ENCODE measurements at regions of chr19 and their contacts with region 1.

Region 1: GRCh38 chr19:45902651-45903625 is 525 bp upstream of the MYPOP start:
- DNase-seq: peak; percentile 100
- H3K4me3 Mint-ChIP-seq: peak overlapping the region; percentile 85
- H3K27ac Mint-ChIP-seq: peak overlapping the region; percentile 91
- H3K4me1 Mint-ChIP-seq: peaks cover 22% of the 10 kb centered on the region
- H3K27me3 Mint-ChIP-seq: peaks cover 2% of the 10 kb centered on the region

Region 2: GRCh38 chr19:45770192-45771101 is 132.5 kb before region 1 on chr19:
- intact Hi-C with region 1: loop called (anchors 1 kb)
- DNase-seq: peak; percentile 97
- H3K4me3 Mint-ChIP-seq: peak overlapping the region; percentile 93
- H3K27ac Mint-ChIP-seq: peak overlapping the region; percentile 56
- H3K4me1 Mint-ChIP-seq: peaks cover 12% of the 10 kb centered on the region
- H3K27me3 Mint-ChIP-seq: peaks cover 20% of the 10 kb centered on the region

Region 3: DNA sequence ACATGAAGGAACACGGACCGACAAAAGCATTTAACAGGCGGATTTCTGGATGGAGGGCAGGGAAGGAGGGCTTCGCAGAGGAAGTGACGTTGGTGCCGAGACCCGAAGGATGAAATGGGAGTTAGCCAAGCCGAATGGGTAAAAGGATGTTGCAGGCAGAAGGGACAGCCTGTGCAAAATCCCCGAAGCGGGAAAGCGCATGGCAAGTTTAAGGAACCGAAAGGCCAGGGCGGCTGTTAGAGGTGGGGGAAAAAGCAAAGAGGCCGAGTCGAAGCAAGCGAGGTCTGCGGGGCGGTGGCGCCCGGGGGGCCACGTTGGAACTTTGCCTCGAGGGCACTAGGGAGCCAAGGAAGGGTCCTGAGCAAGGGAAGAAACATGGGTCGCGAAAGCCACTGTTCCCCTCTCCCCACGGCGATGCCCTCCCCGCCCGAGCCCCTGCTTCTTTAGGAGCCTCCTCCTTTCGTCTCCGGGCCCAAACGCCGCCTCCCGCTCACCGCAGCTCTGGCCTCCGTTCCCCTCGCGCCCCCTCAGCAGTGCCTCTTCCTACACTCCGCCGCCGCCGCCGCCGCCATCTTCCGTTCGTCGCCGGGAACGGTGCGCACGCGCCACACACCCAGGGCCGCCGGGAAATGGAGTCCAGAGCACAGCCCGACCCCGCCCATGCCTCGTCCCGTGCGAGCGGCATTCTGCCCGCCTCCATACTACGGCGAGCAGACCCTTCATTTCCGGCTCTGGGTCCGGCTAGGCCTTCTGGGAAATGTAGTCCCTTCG is 40.2 kb before region 1 on chr19 and contains the start of gene SYMPK:
- intact Hi-C with region 1: loop called (anchors 1 kb)
- DNase-seq: peak; percentile 100
- H3K4me3 Mint-ChIP-seq: peak within 1 kb of the TSS; percentile 90
- H3K27ac Mint-ChIP-seq: peak within 1 kb of the TSS; percentile 97
- H3K4me1 Mint-ChIP-seq: peaks cover 24% of the 10 kb centered on the region
- H3K27me3 Mint-ChIP-seq: peaks cover 36% of the 10 kb centered on the region
- total RNA-seq, gene SYMPK: 124 and 131 TPM in 2 replicates

Region 4: DNA sequence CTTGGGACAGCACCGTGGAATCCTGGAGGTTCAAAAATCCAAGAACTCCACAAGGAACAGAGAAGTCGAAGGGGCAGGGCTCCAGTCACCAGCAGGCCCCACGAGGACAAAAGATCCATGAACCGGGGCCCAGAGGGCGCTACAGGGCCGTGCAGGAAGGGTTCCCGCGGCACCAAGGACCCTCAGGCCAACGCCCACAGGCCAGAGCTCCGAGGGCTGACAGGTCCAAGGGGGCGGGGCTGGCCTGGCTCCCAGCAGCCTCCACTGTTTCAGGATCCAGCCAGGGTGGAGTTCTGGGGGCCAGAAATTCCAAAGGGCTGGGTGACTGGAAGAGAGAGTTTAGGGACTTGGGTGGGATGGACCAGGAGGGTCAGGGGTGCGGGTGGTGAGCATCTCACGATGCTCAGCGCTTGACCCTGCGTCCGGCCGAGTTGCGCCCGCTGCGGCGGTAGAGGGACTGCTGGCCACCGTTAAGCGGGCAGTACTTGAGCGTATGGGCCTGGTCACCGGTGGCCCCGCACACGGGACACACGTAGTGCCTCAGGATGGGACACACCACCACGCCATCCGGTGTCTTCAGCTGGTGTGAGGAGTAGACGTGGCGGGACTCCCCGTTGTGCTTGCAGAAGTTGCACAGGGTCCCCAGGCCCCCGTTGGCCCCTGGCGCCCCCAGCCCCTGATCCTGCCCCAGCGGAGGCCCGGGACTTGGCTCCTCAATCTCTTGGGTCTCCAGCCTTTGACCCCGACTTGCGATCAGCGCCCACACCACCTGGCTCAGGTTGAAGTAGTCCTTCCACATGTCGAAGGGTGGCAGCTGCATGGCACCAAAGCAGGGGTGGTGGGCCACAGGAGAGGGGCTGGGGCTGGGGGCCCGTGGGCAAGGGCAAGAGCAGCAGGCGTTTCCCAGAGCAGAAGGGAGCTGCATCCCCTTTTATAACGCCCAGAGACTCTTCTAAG is 11.2 kb after region 1 on chr19 and contains the start of gene NANOS2:
- intact Hi-C with region 1: no loop called
- DNase-seq: peak; percentile 69
- H3K4me3 Mint-ChIP-seq: no peak within 1 kb of the TSS
- H3K27ac Mint-ChIP-seq: no peak within 1 kb of the TSS
- H3K4me1 Mint-ChIP-seq: peaks cover 17% of the 10 kb centered on the region
- H3K27me3 Mint-ChIP-seq: peaks cover 13% of the 10 kb centered on the region
- total RNA-seq, gene NANOS2: not detected in 2 replicates

Region 5: GRCh38 chr19:45994989-45995714 is 92.2 kb after region 1 on chr19 and contains the start of gene CCDC61:
- intact Hi-C with region 1: loop called (anchors 1 kb)
- DNase-seq: peak; percentile 99
- H3K4me3 Mint-ChIP-seq: no peak within 1 kb of the TSS
- H3K27ac Mint-ChIP-seq: no peak within 1 kb of the TSS
- H3K4me1 Mint-ChIP-seq: peaks cover 20% of the 10 kb centered on the region
- H3K27me3 Mint-ChIP-seq: peaks cover 6% of the 10 kb centered on the region
- total RNA-seq, gene CCDC61: 23.1 and 30.1 TPM in 2 replicates

Region 6: GRCh38 chr19:46600384-46601317 is 697.7 kb after region 1 on chr19:
- intact Hi-C with region 1: loop called (anchors 2 kb)
- DNase-seq: peak; percentile 99
- H3K4me3 Mint-ChIP-seq: peak overlapping the region; percentile 97
- H3K27ac Mint-ChIP-seq: peak overlapping the region; percentile 100
- H3K4me1 Mint-ChIP-seq: peaks cover 18% of the 10 kb centered on the region
- H3K27me3 Mint-ChIP-seq: no peaks in the 10 kb centered on the region

Region 7: DNA sequence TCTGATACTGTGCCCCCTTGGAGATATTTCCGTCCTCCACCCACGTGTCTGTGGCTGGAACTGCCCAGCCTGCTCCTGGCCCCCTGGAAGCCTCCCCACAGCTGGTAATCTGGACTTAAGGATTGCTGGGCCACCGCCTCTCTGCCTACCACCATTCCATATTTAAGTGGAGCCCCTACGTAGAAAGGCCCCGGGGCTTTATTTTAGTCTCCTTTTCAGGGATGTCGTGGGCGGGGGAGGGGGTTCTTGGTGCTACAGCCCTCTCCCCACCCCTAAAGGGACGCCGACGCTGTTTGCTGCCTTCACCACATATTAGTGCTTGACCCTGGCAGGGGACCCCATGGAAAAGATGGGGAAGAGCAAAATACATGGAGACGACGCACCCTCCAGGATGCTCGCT is 1839.7 kb after region 1 on chr19:
- intact Hi-C with region 1: loop called (anchors 5 kb)
- DNase-seq: no peak
- H3K4me3 Mint-ChIP-seq: peak overlapping the region; percentile 91
- H3K27ac Mint-ChIP-seq: peak overlapping the region; percentile 94
- H3K4me1 Mint-ChIP-seq: peaks cover 20% of the 10 kb centered on the region
- H3K27me3 Mint-ChIP-seq: peaks cover 2% of the 10 kb centered on the region

Measured in activated CD4-positive, alpha-beta T cell treated with anti-CD3 and anti-CD28 coated beads, Interleukin-2, amount 10 ng/mL, durations not matched to agents 24 days and 14 days (primary cell).